HepG2 (cell line): ENCODE measurements at regions of chr3 and their contacts with region 1.

Region 1: DNA sequence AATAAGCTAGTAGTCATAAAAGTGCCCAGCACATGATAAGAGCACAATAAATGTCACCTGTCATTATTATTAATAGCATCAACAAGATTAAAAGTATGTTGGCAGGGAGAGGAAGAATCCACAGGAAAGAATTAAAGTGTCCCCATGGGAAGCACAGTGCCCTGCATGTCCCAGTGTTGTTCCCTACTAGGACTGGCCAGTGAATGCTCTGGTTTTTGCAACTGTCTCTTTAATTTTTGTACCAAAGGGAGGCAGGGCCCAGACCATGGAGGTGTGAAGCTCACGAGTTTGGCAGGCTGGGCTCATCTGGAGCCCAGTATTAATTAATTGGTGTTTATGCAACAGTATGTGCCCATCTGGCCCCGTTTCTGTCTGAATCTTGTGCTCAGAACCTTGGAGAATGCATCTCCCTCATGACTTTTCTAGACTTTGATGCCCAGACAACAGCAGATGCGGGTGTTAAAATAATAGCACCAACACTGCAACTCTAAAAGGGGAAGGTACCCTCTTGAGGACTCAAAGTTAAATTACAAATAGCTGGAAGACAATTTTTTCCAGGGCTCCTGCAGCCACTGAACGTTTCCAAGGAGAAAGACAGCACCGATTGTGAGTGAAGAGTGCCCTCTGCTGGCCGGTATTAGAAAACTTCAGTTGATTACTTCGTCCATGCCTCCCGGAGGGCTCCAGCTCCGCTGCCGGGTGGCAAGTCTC is 71.9 kb upstream of the SPATA12 start:
- DNase-seq: peak; percentile 73
- ATAC-seq: peak; percentile 61
- H3K4me3 ChIP-seq: peak overlapping the region in 2 of 3 experiments; percentile 24 to 68; a peak in 3 of 6 replicates
- H3K27ac ChIP-seq: no peak overlapping the region
- H3K4me1 ChIP-seq: peaks cover 64% of the 10 kb centered on the region
- H3K27me3 ChIP-seq: no peaks in the 10 kb centered on the region
- CTCF ChIP-seq: peak; percentile 86
- EP300 ChIP-seq: no peak
- POLR2A ChIP-seq: no peak
- RAD21 ChIP-seq: peak; percentile 82

Region 2: DNA sequence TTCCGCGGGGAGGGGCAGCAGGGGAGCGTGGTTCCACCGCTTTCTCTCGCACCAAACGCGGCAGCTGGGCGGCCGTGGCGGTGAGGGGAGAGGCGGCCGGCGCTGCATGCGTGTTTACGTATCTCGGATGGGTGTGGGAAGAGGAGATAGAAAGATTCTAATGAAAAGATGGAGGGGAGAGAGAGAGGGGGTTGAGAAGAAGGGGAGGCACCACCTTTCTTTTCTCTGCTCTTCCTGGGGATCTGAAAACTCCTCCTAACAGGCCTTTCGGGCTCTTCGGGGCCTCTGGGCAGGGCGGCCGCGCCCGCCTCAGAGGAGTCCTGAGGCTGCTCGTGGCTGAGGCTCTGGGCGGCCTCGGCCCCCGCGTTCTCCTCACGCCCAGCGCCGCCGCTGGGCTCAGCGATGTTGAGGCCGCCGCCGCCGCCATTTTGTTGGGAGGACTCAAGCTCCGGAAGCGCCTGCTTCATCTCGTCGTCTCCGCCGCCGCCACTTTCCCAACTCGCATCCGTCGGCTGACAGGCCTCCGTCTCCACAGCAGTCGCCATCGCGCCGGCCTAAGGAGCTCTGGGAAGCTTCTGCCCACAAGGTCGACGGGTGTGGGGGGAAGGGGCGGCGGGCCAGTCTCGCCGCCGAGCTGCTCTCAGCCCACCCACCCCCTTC is 306.0 kb before region 1 on chr3:
- CTCF ChIA-PET with region 1: no interaction called
- POLR2A ChIA-PET with region 1: interaction called, 15 read pairs
- in situ Hi-C with region 1: no loop called
- intact Hi-C with region 1: no loop called
- DNase-seq: peak; percentile 41
- ATAC-seq: peak; percentile 90
- H3K4me3 ChIP-seq: peak overlapping the region; percentile 73 to 86 (median 78)
- H3K27ac ChIP-seq: peak overlapping the region; percentile 97
- H3K4me1 ChIP-seq: peaks cover 42% of the 10 kb centered on the region
- H3K27me3 ChIP-seq: no peaks in the 10 kb centered on the region
- CTCF ChIP-seq: 0 out of 2 replicates have a peak, but pooled peaks have one; percentile 21
- EP300 ChIP-seq: no peak
- POLR2A ChIP-seq: peak; percentile 72 to 83
- RAD21 ChIP-seq: no peak

Region 3: DNA sequence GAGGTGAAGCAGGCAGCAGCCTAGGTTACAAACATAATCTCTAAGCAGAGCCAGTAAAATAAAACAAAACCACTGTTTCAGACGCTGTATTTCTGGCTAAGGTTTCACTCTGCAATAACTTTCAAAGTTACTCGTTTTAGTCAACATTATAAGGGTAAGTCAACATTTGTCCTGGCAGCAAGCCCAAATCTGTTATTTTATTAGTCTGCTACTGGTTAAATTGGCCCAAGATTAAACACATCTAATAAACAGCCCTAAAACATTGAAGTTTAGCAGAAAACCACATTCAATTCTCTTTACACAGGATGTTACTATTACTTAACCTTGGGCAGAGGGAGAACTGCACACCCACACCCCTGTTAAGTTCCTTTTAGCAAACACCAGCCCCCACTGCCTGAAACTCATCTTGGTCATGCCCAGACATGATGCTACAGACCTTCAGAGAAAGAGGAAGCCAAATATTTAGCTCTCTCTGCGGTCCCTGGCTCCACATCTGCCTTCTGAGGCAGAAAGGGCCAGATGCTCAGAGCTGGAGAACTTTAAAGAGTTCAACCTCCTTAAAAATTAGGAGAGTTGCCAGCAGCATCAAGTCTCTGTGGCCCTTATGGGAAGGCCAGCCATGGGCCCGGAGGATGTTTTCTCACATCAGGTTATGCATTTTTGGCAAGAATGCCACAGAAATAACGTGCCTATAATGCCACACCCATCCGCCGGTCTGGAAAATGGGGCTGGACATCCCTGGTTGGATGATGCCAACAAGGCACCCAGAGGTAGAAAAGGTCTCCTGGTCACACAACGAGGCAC is 204.8 kb before region 1 on chr3:
- CTCF ChIA-PET with region 1: no interaction called
- POLR2A ChIA-PET with region 1: interaction called, 15 read pairs
- in situ Hi-C with region 1: no loop called
- intact Hi-C with region 1: no loop called
- DNase-seq: peak; percentile 77
- ATAC-seq: peak; percentile 33
- H3K4me3 ChIP-seq: no peak overlapping the region
- H3K27ac ChIP-seq: peak overlapping the region; percentile 65
- H3K4me1 ChIP-seq: peaks cover 70% of the 10 kb centered on the region
- H3K27me3 ChIP-seq: no peaks in the 10 kb centered on the region
- CTCF ChIP-seq: no peak
- EP300 ChIP-seq: peak in 1 of 2 experiments; percentile 61; a peak in 2 of 4 replicates
- POLR2A ChIP-seq: no peak
- RAD21 ChIP-seq: no peak

Region 4: DNA sequence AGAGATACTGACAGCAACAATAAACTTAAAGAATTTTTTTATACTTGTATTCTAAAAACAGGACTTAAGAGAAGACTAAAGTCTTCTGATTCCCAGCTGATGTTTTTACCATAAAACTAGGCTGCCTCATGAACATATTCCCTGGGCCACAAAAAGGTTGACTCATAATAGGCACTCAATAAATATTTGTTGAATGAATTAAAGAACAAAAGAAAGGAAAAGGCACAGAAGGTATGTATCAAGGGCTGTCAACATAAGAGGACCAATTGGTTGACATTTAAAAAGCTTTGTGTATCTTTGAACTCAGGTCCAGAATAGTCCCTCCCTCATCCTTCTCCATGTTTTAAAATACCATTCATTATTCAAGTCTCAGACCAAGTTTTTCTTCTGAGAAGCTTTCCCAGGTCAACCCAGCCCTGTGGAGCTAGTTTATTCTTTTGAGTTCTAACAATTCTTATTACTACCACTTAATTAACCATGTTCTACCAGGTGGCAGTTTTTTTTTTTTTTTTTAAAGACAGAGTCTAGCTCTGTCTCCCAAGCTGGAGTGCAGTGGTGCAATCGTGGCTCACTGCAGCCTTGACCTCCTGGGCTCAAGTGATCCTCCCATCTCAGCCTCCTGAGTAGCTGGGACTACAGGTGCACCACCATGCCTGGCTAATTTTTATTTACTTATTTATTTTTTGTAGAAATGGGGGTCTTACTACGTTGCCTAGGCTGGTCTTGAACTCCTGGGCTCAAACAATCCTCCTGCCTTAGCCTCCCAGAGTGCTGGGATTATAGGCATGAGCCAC is 169.4 kb before region 1 on chr3:
- CTCF ChIA-PET with region 1: no interaction called
- POLR2A ChIA-PET with region 1: interaction called, 19 read pairs
- in situ Hi-C with region 1: no loop called
- intact Hi-C with region 1: loop called (anchors 5 kb)
- DNase-seq: peak; percentile 85
- ATAC-seq: peak; percentile 69
- H3K4me3 ChIP-seq: peak overlapping the region in 2 of 3 experiments; percentile 19 to 31; a peak in 3 of 6 replicates
- H3K27ac ChIP-seq: peak overlapping the region; percentile 58
- H3K4me1 ChIP-seq: peaks cover 69% of the 10 kb centered on the region
- H3K27me3 ChIP-seq: no peaks in the 10 kb centered on the region
- CTCF ChIP-seq: no peak
- EP300 ChIP-seq: peak in 1 of 2 experiments; percentile 44; a peak in 2 of 4 replicates
- POLR2A ChIP-seq: no peak
- RAD21 ChIP-seq: no peak

Region 5: DNA sequence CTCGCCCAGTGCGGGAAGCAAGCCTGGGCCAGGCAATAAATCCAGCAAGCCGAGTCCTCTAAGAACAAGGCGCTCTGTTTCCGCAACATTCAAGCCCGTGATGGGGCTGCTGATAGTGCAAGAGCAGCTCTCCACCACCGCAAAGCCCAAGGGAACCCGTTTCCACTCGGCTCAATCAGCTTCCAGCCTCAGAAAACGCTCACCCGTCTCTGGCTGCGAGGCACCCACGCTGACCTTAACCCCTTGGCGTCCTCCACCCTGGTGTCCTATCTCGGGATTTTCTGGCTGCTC is 89.7 kb after region 1 on chr3:
- CTCF ChIA-PET with region 1: no interaction called
- POLR2A ChIA-PET with region 1: interaction called, 29 read pairs
- in situ Hi-C with region 1: loop called (anchors 10 kb)
- intact Hi-C with region 1: loop called (anchors 5 kb)
- DNase-seq: peak; percentile 28
- ATAC-seq: peak; percentile 56
- H3K4me3 ChIP-seq: peak overlapping the region; percentile 71 to 93 (median 76)
- H3K27ac ChIP-seq: peak overlapping the region; percentile 62
- H3K4me1 ChIP-seq: peaks cover 43% of the 10 kb centered on the region
- H3K27me3 ChIP-seq: peaks cover 0 to 4% of the 10 kb centered on the region in 2 experiments; a peak in 1 of 5 replicates
- CTCF ChIP-seq: no peak
- EP300 ChIP-seq: no peak
- POLR2A ChIP-seq: no peak
- RAD21 ChIP-seq: no peak